SK-N-SH (cell line): ENCODE measurements at regions of chr12 and their contacts with region 1.

Region 1: GRCh38 chr12:49636979-49637755 is 13.8 kb downstream of the PRPF40B start:
- DNase-seq: peak; percentile 87
- H3K4me3 ChIP-seq: no peak overlapping the region
- H3K27ac ChIP-seq: peak overlapping the region; percentile 55 to 82
- H3K4me1 ChIP-seq: peaks cover 0 to 14% of the 10 kb centered on the region in 2 experiments; a peak in 2 of 4 replicates
- H3K27me3 ChIP-seq: no peaks in the 10 kb centered on the region
- CTCF ChIP-seq: peak; percentile 74
- EP300 ChIP-seq: no peak
- RAD21 ChIP-seq: peak; percentile 72

Region 2: GRCh38 chr12:49244176-49244575 is 393.0 kb before region 1 on chr12:
- CTCF ChIA-PET with region 1: no interaction called
- POLR2A ChIA-PET with region 1: no interaction called
- DNase-seq: no peak
- H3K4me3 ChIP-seq: no peak overlapping the region
- H3K27ac ChIP-seq: peak overlapping the region; percentile 59 to 96; a peak in 3 of 4 replicates
- H3K4me1 ChIP-seq: peaks cover 0 to 13% of the 10 kb centered on the region in 2 experiments; a peak in 2 of 4 replicates
- H3K27me3 ChIP-seq: no peaks in the 10 kb centered on the region
- CTCF ChIP-seq: no peak
- EP300 ChIP-seq: no peak
- RAD21 ChIP-seq: no peak

Region 3: DNA sequence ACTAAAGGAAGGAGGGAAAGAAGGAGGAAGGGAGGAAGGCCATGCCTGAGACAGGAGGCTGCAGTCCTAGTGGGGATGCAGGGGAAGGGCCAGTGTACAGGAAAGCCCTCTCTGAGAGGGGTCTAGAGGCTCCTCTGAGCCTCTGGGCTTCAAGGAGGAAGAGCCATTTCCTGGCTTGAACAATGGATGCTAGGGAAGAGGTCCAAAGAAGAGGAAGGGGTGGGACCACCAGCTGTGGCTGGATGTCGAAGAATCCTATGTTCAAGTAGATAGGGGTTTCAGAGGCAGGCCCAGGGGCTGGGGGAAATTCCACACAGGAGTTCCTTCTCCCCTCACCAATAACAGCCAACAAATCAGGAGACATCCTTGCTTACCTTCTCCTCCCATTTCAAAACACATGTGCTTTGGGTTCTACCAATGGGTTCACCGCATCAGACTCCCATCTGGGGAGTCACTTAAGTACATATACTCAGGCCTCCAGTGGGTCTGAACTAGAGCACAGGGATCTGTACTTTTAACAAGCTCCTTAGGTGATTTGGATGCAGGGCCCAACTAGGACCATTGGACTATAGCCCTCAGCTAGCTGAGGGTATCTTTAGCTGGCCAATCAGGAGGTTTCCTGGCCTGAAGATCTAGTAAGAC is 18.5 kb after region 1 on chr12:
- CTCF ChIA-PET with region 1: interaction called, 27 read pairs
- POLR2A ChIA-PET with region 1: no interaction called
- DNase-seq: no peak
- H3K4me3 ChIP-seq: no peak overlapping the region
- H3K27ac ChIP-seq: no peak overlapping the region
- H3K4me1 ChIP-seq: no peaks in the 10 kb centered on the region
- H3K27me3 ChIP-seq: no peaks in the 10 kb centered on the region
- CTCF ChIP-seq: no peak
- EP300 ChIP-seq: no peak
- RAD21 ChIP-seq: no peak

Region 4: GRCh38 chr12:49689785-49690184 is 52.6 kb after region 1 on chr12:
- CTCF ChIA-PET with region 1: interaction called, 11 read pairs
- POLR2A ChIA-PET with region 1: no interaction called
- DNase-seq: no peak
- H3K4me3 ChIP-seq: no peak overlapping the region
- H3K27ac ChIP-seq: no peak overlapping the region
- H3K4me1 ChIP-seq: peaks cover 0 to 3% of the 10 kb centered on the region in 2 experiments; a peak in 2 of 4 replicates
- H3K27me3 ChIP-seq: no peaks in the 10 kb centered on the region
- CTCF ChIP-seq: no peak
- EP300 ChIP-seq: no peak
- RAD21 ChIP-seq: no peak

Region 5: DNA sequence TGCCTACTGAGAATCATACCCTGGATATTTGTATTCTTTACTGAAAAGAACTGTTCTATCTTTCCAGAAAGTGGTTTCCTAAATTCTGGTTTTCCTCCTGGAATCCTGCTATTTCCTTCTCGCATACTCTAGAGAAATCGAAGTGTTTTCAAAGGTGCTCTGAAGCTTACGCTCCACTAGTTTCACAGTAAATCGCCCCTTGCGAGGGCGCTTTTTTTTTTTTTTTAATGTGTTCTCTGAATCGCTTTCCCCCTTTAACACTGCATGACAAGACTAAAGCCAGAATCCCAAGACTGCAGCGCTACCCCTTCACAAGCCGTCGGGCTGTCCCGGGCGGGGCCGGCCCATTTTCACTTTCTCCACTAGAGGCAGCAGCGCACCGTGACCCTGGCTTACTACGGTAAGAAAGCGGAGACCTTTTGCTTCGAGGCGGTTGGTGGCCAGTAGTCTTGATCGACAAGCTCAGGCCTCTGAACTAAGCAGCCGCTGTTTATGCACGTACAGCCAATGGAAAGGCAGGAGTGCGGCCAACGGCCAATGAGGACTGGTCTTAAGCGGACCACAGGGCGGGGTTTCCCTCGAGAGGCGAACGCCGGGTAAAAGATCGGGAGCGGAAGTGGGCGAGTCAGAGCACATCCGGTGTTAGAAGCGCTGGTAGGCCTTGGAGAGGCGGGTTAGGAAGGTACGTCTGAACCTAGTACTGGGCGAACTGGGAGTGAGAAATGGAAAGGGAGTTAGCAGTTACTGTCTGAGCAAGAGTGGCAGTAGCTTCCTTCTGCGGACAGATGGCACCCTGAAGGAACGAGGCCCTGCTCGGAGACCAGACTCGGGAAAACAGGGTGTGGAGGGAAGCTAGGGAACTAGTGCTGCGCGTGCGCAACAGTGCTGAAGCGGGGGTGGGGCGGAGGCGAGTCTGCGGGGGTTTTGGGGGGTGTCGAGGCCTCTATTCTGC is 104.0 kb after region 1 on chr12 and contains the start of gene TMBIM6:
- CTCF ChIA-PET with region 1: interaction called, 22 read pairs
- POLR2A ChIA-PET with region 1: interaction called, 20 read pairs
- DNase-seq: peak; percentile 90
- H3K4me3 ChIP-seq: peak within 1 kb of the TSS; percentile 90 to 94
- H3K27ac ChIP-seq: peak within 1 kb of the TSS; percentile 96 to 98
- H3K4me1 ChIP-seq: peaks cover 13% of the 10 kb centered on the region in 2 experiments
- H3K27me3 ChIP-seq: no peaks in the 10 kb centered on the region
- CTCF ChIP-seq: peak; percentile 94
- EP300 ChIP-seq: no peak
- RAD21 ChIP-seq: peak; percentile 65
- polyA plus RNA-seq, gene TMBIM6: 290 and 360 TPM in 2 replicates

Region 6: GRCh38 chr12:49776413-49776812 is 139.2 kb after region 1 on chr12:
- CTCF ChIA-PET with region 1: interaction called, 10 read pairs
- POLR2A ChIA-PET with region 1: no interaction called
- DNase-seq: peak; percentile 79
- H3K4me3 ChIP-seq: peak overlapping the region in 1 of 2 experiments; percentile 9; a peak in 1 of 4 replicates
- H3K27ac ChIP-seq: no peak overlapping the region
- H3K4me1 ChIP-seq: no peaks in the 10 kb centered on the region
- H3K27me3 ChIP-seq: no peaks in the 10 kb centered on the region
- CTCF ChIP-seq: peak; percentile 84
- EP300 ChIP-seq: no peak
- RAD21 ChIP-seq: peak; percentile 91